ENCODE measurements at regions of chr14 and their contacts with region 1.

Region 1: GRCh38 chr14:59632381-59632780 is 55.8 kb upstream of the CCDC175 start:
- DNase-seq: peak; percentile 12 to 31 (median 20)
- ATAC-seq: peak; percentile 77
- H3K4me3 ChIP-seq: no peak overlapping the region
- H3K27ac ChIP-seq: no peak overlapping the region
- H3K4me1 ChIP-seq: peaks cover 0 to 6% of the 10 kb centered on the region in 2 experiments; a peak in 2 of 5 replicates
- H3K27me3 ChIP-seq: 0 out of 5 replicates have a peak, but pooled peaks cover 0 to 5% of the 10 kb centered on the region in 2 experiments
- CTCF ChIP-seq: peak; percentile 40 to 54 (median 54)
- EP300 ChIP-seq: no peak
- POLR2A ChIP-seq: no peak
- RAD21 ChIP-seq: peak; percentile 17 to 57; a peak in 3 of 4 replicates

Region 2: DNA sequence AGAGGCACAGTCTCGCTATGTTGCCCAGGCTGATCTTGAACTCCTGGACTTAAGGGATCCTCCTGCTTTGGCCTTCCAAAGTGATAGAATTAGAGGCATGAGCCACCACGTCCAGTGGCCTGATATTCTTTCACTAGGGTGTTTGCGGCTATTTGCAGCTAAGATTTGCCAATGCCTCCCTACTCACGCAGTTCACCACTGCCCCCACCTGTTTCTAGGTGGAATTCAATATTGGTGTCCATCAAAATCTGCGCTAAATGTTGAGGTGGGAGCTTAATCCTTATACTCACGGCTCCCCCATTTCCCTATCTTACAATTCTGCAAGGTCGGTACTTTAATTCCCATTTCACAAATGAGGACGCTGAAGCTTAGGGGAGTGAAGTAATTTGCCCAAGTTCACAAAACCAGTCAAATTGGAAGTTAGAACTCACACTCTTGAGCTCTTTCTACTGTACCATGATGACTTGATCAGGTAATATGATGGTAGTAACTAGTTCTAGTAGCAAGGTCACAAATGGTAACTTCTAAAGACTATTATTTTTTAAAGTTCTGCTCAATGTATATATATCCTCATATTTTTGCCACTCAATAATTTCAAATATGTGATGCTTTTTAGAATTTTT is 265.5 kb after region 1 on chr14:
- CTCF ChIA-PET with region 1: no interaction called
- POLR2A ChIA-PET with region 1: no interaction called
- in situ Hi-C with region 1: no loop called
- intact Hi-C with region 1: loop called (anchors 5 kb)
- DNase-seq: peak in 3 of 4 experiments; percentile 6 to 18 (median 14)
- ATAC-seq: peak; percentile 67
- H3K4me3 ChIP-seq: no peak overlapping the region
- H3K27ac ChIP-seq: no peak overlapping the region
- H3K4me1 ChIP-seq: no peaks in the 10 kb centered on the region
- H3K27me3 ChIP-seq: no peaks in the 10 kb centered on the region
- CTCF ChIP-seq: peak; percentile 43 to 46 (median 45)
- EP300 ChIP-seq: no peak
- POLR2A ChIP-seq: no peak
- RAD21 ChIP-seq: peak in 1 of 2 experiments; percentile 59; a peak in 2 of 4 replicates

Region 3: GRCh38 chr14:59918824-59919569 is 286.6 kb after region 1 on chr14:
- CTCF ChIA-PET with region 1: interaction called, 4 read pairs
- POLR2A ChIA-PET with region 1: no interaction called
- in situ Hi-C with region 1: no loop called
- intact Hi-C with region 1: loop called (anchors 5 kb)
- DNase-seq: peak in 3 of 4 experiments; percentile 9 to 20 (median 16)
- ATAC-seq: peak; percentile 69
- H3K4me3 ChIP-seq: peak overlapping the region; percentile 18
- H3K27ac ChIP-seq: no peak overlapping the region
- H3K4me1 ChIP-seq: peaks cover 0 to 6% of the 10 kb centered on the region in 2 experiments; a peak in 3 of 5 replicates
- H3K27me3 ChIP-seq: peaks cover 0 to 4% of the 10 kb centered on the region in 2 experiments; a peak in 3 of 5 replicates
- CTCF ChIP-seq: peak in 2 of 3 experiments; percentile 25 to 27; a peak in 2 of 6 replicates
- EP300 ChIP-seq: no peak
- POLR2A ChIP-seq: no peak
- RAD21 ChIP-seq: peak in 1 of 2 experiments; percentile 41; a peak in 2 of 4 replicates